Right lobe of liver (tissue), 6 donors: ENCODE measurements at regions of chr1 and their contacts with region 1.

Region 1: DNA sequence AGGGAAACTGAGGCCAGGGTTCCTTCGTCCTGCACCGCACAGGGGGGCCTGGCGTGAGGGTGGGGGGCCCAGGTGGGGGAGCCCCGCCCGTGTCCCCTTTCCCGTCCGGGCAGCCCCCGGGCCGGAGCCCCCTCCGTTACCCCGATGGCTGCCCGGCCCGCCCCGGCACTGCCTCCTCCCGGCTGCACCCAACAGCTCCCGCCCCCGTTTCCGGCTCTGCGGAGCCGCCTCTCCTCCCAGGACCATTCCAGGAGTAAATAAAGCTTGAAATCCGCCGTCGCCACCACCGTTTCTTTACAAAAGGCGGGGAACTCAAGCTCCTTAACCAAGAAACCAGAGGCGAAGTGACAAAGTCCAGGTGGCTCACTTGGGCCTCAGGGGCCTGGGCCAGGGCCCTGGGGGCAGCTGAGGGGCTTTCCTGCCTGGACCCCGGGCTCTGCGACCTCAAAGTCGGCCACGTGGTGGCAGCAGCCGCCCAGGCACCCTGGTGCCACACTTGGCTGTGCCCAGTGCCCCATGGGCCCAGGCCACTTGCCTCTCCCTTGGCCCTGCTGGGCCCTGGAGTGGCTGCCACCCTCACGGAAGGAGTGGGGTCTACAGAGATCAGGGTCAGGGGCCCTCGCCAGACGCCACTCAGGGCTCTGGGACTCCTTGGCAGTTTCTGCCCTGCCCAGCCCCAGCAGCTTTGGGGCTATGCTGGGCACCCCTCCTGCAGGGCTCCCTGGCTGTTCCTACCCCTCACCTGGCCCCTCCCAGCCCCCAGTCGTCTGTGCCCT is 514 bp upstream of the FAAP20 start:
- DNase-seq: peak; percentile 93 to 95 (median 95)
- ATAC-seq: peak; percentile 76 to 85 (median 80)
- H3K4me3 ChIP-seq: peak overlapping the region; percentile 60 to 66 (median 63)
- H3K27ac ChIP-seq: peak overlapping the region; percentile 72 to 89 (median 82)
- H3K4me1 ChIP-seq: peaks cover 0 to 27% (median 13%) of the 10 kb centered on the region in 4 donors
- H3K27me3 ChIP-seq: no peaks in the 10 kb centered on the region
- CTCF ChIP-seq: peak; percentile 94 to 99 (median 97)
- POLR2A ChIP-seq: peak; percentile 45

Region 2: GRCh38 chr1:2233997-2234761 is 39.1 kb after region 1 on chr1:
- intact Hi-C with region 1: loop called in 1 of 2 experiments (anchors 5 kb)
- DNase-seq: peak; percentile 92 to 96 (median 95)
- ATAC-seq: peak; percentile 60 to 68 (median 64)
- H3K4me3 ChIP-seq: peak overlapping the region in 2 of 3 donors; percentile 30 to 67
- H3K27ac ChIP-seq: peak overlapping the region; percentile 68 to 93 (median 68)
- H3K4me1 ChIP-seq: peaks cover 0 to 83% (median 49%) of the 10 kb centered on the region in 4 donors
- H3K27me3 ChIP-seq: no peaks in the 10 kb centered on the region
- CTCF ChIP-seq: no peak
- POLR2A ChIP-seq: peak; percentile 76

Region 3: GRCh38 chr1:2290595-2291510 is 95.8 kb after region 1 on chr1:
- intact Hi-C with region 1: no loop called
- DNase-seq: peak in 2 of 3 donors; percentile 70 to 78
- ATAC-seq: peak; percentile 49 to 74 (median 60)
- H3K4me3 ChIP-seq: no peak overlapping the region
- H3K27ac ChIP-seq: peak overlapping the region; percentile 19 to 56 (median 21)
- H3K4me1 ChIP-seq: peaks cover 0 to 37% (median 4%) of the 10 kb centered on the region in 4 donors
- H3K27me3 ChIP-seq: no peaks in the 10 kb centered on the region
- CTCF ChIP-seq: no peak
- POLR2A ChIP-seq: no peak

Region 4: GRCh38 chr1:2314803-2315673 is 120.0 kb after region 1 on chr1:
- intact Hi-C with region 1: loop called in 1 of 2 experiments (anchors 5 kb)
- DNase-seq: peak in 1 of 3 donors; percentile 75
- ATAC-seq: peak; percentile 1 to 55 (median 30)
- H3K4me3 ChIP-seq: peak overlapping the region; percentile 53 to 56 (median 56)
- H3K27ac ChIP-seq: peak overlapping the region; percentile 62 to 77 (median 64)
- H3K4me1 ChIP-seq: peaks cover 0 to 19% (median 2%) of the 10 kb centered on the region in 4 donors
- H3K27me3 ChIP-seq: no peaks in the 10 kb centered on the region
- CTCF ChIP-seq: peak; percentile 65 to 95 (median 92)
- POLR2A ChIP-seq: no peak

Region 5: GRCh38 chr1:2381741-2382620 is 186.9 kb after region 1 on chr1:
- intact Hi-C with region 1: loop called (anchors 2 to 5 kb)
- DNase-seq: peak; percentile 86 to 89 (median 87)
- ATAC-seq: peak; percentile 93 to 97 (median 94)
- H3K4me3 ChIP-seq: no peak overlapping the region
- H3K27ac ChIP-seq: no peak overlapping the region
- H3K4me1 ChIP-seq: no peaks in the 10 kb centered on the region
- H3K27me3 ChIP-seq: no peaks in the 10 kb centered on the region
- CTCF ChIP-seq: peak; percentile 92 to 96 (median 94)
- POLR2A ChIP-seq: no peak